ENCODE measurements at regions of chr1 and their contacts with region 1.

Region 1: DNA sequence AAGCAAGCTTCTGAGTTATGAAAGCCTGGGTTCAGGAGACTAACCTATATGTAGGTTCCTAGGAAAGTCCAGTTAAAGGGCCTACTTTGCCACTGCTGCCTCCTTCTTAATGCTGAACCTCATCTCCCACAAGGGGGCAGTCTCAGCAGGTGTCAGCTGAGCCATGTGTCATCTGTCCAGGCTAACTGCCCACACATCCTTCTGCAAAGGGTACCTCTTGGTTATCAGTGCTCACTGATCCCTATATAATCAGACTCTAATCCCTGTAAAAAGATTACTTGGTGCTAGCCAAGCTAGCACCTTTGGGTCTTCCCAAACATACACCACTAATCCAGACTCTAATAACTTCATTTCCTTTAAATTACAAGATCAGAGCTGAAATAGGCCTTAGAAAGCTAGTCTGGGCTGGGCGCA is 9.0 kb downstream of the PRDX1 start:
- DNase-seq: no peak
- ATAC-seq: peak; percentile 72
- H3K4me3 Mint-ChIP-seq: no peak overlapping the region
- H3K27ac Mint-ChIP-seq: peak overlapping the region; percentile 26
- H3K4me1 Mint-ChIP-seq: peaks cover 8% of the 10 kb centered on the region
- H3K27me3 Mint-ChIP-seq: no peaks in the 10 kb centered on the region

Region 2: GRCh38 chr1:45455162-45455561 is 57.5 kb before region 1 on chr1:
- POLR2A ChIA-PET with region 1: no interaction called
- DNase-seq: no peak
- ATAC-seq: no peak
- H3K4me3 Mint-ChIP-seq: no peak overlapping the region
- H3K27ac Mint-ChIP-seq: no peak overlapping the region
- H3K4me1 Mint-ChIP-seq: no peaks in the 10 kb centered on the region
- H3K27me3 Mint-ChIP-seq: no peaks in the 10 kb centered on the region

Region 3: DNA sequence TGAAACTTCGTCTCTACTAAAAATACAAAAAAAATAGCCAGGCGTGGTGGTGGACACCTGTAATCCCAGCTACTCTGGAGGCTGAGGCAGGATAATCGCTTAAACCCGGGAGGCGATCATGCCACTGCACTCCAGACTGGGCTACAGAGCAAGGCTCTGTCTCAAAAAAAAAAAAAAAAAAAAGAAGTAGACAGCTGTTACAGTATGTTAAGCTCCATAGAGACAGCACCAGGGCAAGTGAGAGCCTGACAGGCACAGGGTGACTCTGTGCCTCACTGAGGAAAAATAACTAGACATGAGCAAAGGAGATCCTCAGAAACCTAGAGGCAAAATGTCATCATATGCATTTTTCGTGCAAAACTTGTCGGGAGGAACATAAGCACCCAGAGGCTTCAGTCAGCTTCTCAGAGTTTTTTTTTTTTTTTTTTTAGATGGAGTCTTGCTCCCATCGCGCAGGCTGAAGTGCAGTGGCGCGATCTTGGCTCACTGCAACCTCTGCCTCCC is 18.0 kb after region 1 on chr1:
- POLR2A ChIA-PET with region 1: no interaction called
- DNase-seq: no peak
- ATAC-seq: no peak
- H3K4me3 Mint-ChIP-seq: no peak overlapping the region
- H3K27ac Mint-ChIP-seq: no peak overlapping the region
- H3K4me1 Mint-ChIP-seq: peaks cover 2% of the 10 kb centered on the region
- H3K27me3 Mint-ChIP-seq: peaks cover 8% of the 10 kb centered on the region

Region 4: GRCh38 chr1:45569962-45570581 is 57.4 kb after region 1 on chr1:
- POLR2A ChIA-PET with region 1: interaction called, 16 read pairs
- DNase-seq: peak; percentile 63
- ATAC-seq: peak; percentile 79
- H3K4me3 Mint-ChIP-seq: no peak overlapping the region
- H3K27ac Mint-ChIP-seq: no peak overlapping the region
- H3K4me1 Mint-ChIP-seq: peaks cover 2% of the 10 kb centered on the region
- H3K27me3 Mint-ChIP-seq: no peaks in the 10 kb centered on the region